Activated CD8-positive, alpha-beta memory T cell treated with anti-CD3 and anti-CD28 coated beads, Interleukin-2, amount 10 ng/mL, durations not matched to agents 7 days and 5 days (primary cell): ENCODE measurements at regions of chr1 and their contacts with region 1.

Region 1: DNA sequence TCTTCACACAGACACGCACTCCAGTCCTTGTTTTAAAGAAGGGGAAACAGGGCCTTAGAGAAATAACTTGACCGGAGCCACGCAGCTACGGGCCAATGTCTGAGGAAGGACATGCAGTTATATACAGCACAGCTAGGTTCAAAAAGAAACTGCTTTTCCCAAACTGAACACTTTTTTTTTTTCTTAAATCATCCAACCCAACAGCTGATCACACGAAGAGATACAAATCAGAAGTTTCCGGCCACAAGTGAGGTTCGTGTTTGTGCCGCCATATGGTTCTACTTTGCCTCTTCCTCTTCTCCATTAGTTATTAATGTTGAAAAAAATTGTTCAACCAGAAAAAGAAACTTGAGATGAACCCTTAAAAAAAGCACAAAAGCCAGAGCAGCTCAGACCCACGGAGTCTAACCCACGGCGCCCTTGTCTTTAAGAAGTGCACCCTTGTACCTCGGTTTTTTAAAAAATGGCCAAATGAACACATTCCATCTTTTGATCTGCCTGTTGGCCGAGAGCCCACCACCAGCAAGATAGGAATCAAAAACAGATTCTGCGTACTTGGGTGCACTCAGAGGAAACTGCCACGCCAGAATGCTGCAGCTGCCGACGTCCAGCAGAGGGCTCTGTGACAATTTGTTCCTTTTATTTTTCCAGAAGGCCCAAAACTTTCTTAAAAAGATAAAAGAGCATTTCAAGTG is 78.9 kb downstream of the SLC66A1 start:
- DNase-seq: peak; percentile 76
- ATAC-seq: peak; percentile 79
- H3K4me3 Mint-ChIP-seq: peak overlapping the region; percentile 71
- H3K27ac Mint-ChIP-seq: peak overlapping the region; percentile 98
- H3K4me1 Mint-ChIP-seq: peaks cover 59% of the 10 kb centered on the region
- H3K27me3 Mint-ChIP-seq: no peaks in the 10 kb centered on the region

Region 2: GRCh38 chr1:19405761-19406487 is 14.9 kb after region 1 on chr1:
- CTCF ChIA-PET with region 1: interaction called, 10 read pairs
- DNase-seq: no peak
- ATAC-seq: no peak
- H3K4me3 Mint-ChIP-seq: no peak overlapping the region
- H3K27ac Mint-ChIP-seq: no peak overlapping the region
- H3K4me1 Mint-ChIP-seq: peaks cover 9% of the 10 kb centered on the region
- H3K27me3 Mint-ChIP-seq: no peaks in the 10 kb centered on the region

Region 3: DNA sequence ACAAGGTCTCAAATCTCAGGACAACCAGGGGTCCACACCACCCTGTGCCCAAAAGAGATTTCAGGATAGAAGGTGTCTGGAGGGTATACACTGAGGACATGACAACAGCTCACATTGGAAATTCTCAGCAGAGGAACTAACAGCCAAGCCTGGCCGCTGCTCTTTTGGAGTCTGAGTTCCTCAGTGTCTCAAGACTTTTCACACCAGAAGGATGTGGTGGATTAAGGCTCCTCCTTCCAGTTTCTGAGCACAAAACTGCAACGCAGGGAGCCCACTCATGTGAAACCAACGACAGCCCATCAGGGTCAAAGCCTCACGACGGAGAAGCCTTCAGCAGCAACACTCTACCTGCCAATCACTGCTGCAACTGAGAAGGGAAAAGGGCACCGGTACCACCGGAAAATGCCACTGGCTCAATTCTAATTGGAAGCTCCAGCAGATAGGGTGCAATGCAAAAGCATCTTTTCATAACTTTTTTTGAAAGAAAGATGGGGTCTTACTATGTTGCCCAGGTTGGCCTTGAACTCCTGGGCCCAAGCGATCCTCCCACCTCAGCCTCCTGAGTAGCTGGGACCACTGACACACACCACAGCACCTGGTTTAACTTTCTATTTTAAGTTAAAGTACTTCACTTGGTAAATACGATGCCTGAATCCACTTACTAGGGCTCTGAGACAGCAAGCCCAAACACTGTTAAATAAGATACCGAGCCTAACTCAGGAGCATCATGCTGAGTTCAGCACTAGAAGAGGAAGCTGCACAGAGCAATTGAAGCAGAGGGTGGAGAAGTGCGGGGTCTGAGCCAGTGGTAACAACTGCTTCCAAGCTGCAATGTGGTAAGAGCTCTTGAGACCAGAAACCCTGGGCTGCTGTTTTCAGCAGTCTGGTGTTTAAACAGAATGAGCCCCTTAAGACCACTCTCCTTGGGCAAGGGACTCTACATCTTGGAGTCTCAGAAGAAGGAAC is 86.5 kb after region 1 on chr1:
- CTCF ChIA-PET with region 1: interaction called, 10 read pairs
- DNase-seq: peak; percentile 86
- ATAC-seq: peak; percentile 82
- H3K4me3 Mint-ChIP-seq: peak overlapping the region; percentile 70
- H3K27ac Mint-ChIP-seq: peak overlapping the region; percentile 95
- H3K4me1 Mint-ChIP-seq: peaks cover 91% of the 10 kb centered on the region
- H3K27me3 Mint-ChIP-seq: no peaks in the 10 kb centered on the region